CD8-positive, alpha-beta T cell (primary cell): ENCODE measurements at regions of chr7 and their contacts with region 1.

Region 1: DNA sequence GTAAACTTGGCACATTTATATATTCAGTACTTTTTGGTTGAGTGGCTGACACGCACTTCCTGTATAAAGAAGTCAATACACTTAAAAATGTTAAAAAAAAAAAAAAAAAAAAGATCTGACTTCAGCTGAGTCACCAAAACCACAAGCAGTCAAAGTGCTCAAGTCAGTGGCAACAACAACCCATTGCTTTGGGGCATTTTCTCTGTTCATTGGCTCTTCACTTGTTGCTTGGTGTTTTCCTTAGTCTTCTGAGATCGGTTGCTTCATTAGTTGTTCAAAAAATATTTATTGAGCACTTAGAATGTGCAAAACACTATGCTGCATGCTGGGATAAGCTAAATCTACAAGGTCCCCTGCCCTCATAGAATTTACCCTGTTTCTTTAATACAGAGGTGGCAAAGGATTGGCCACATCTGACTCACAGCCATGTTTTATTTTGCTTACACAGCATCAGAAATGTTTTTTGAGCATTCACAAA is 63.7 kb downstream of the ZNRF2 start:
- DNase-seq: peak in 8 of 9 experiments; percentile 23 to 92 (median 56)
- ATAC-seq: peak; percentile 89
- H3K4me3 ChIP-seq: peak overlapping the region in 1 of 2 experiments; percentile 11
- H3K4me3 Mint-ChIP-seq: peak overlapping the region; percentile 36
- H3K27ac ChIP-seq: peak overlapping the region; percentile 39 to 72
- H3K27ac Mint-ChIP-seq: peak overlapping the region; percentile 85
- H3K4me1 ChIP-seq: peaks cover 21% of the 10 kb centered on the region
- H3K4me1 Mint-ChIP-seq: peaks cover 59% of the 10 kb centered on the region
- H3K27me3 ChIP-seq: no peaks in the 10 kb centered on the region
- H3K27me3 Mint-ChIP-seq: no peaks in the 10 kb centered on the region
- CTCF ChIP-seq: no peak

Region 2: DNA sequence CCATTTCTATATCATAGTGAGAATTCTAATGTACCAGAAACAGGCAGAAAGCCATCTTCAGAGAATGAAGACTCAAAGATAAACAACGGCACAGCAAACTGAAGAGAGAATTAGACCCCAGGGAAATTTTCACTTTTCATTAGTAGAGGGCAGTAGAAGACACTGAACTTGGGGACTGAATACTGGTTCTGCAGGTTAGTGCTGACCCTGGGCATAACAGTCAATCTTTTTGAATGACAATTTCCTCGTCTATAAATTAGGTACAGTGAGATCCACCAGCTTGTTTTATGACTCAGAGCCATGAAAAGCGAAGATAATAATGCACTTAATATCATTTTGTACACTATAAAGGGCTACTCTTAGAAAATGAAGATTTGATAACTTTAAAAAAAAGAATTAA is 335.4 kb before region 1 on chr7:
- CTCF ChIA-PET with region 1: no interaction called
- POLR2A ChIA-PET with region 1: no interaction called
- intact Hi-C with region 1: no loop called
- DNase-seq: no peak
- ATAC-seq: no peak
- H3K4me3 ChIP-seq: no peak overlapping the region
- H3K4me3 Mint-ChIP-seq: no peak overlapping the region
- H3K27ac ChIP-seq: no peak overlapping the region
- H3K27ac Mint-ChIP-seq: no peak overlapping the region
- H3K4me1 ChIP-seq: no peaks in the 10 kb centered on the region
- H3K4me1 Mint-ChIP-seq: no peaks in the 10 kb centered on the region
- H3K27me3 ChIP-seq: no peaks in the 10 kb centered on the region
- H3K27me3 Mint-ChIP-seq: no peaks in the 10 kb centered on the region
- CTCF ChIP-seq: no peak

Region 3: DNA sequence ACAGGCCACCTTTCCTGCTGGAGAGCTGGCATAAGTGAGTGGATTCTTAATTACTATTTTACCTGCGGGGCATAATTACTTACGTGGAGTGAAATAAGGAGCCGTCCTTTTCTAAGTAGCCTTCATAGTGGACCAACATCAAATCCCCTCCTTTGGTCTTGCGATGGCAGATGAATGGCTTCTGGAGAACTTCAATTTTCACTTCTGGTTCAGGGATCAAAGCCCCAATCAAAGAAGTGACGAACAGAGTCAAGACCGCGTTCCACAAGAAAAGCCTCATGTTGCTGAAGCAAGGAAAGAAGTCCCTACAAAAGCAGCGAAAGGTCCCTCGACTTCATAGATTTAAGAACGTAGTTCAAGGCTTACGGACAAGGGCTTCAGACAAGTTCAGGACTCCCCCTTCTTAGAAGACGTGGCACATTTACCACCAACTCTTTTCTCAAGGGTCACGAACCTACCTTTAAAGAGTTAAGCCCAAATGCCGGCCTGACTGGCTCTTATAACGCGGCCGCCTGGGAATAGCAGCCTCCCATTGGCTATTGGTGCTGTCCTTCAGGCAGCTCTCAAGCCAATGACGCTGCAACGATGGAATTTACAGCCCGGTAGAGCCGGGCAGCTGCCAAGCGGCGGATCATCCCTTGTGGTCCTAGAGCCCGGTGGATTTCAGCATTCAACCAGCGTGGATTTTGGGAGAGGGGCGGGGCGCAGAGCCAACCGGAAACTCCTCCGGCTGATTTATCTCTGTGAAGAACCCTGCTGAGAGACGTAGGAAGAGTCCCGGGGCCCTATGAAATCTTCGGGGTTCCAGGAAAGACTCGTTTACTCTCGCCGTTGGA is 321.7 kb before region 1 on chr7 and contains the start of gene FKBP14:
- CTCF ChIA-PET with region 1: no interaction called
- POLR2A ChIA-PET with region 1: no interaction called
- intact Hi-C with region 1: loop called (anchors 2 to 5 kb)
- DNase-seq: peak; percentile 71 to 97 (median 91)
- ATAC-seq: peak; percentile 83
- H3K4me3 ChIP-seq: peak within 1 kb of the TSS; percentile 66 to 86
- H3K4me3 Mint-ChIP-seq: peak within 1 kb of the TSS; percentile 96
- H3K27ac ChIP-seq: peak within 1 kb of the TSS; percentile 65 to 70
- H3K27ac Mint-ChIP-seq: peak within 1 kb of the TSS; percentile 84
- H3K4me1 ChIP-seq: peaks cover 12% of the 10 kb centered on the region
- H3K4me1 Mint-ChIP-seq: peaks cover 46% of the 10 kb centered on the region
- H3K27me3 ChIP-seq: no peaks in the 10 kb centered on the region
- H3K27me3 Mint-ChIP-seq: no peaks in the 10 kb centered on the region
- CTCF ChIP-seq: no peak
- total RNA-seq, gene FKBP14: 5.7 to 6.1 TPM

Region 4: GRCh38 chr7:30164567-30164966 is 183.6 kb before region 1 on chr7:
- CTCF ChIA-PET with region 1: no interaction called
- POLR2A ChIA-PET with region 1: no interaction called
- intact Hi-C with region 1: loop called (anchors 2 to 5 kb)
- DNase-seq: peak in 2 of 9 experiments; percentile 40 to 53
- ATAC-seq: no peak
- H3K4me3 ChIP-seq: no peak overlapping the region
- H3K4me3 Mint-ChIP-seq: no peak overlapping the region
- H3K27ac ChIP-seq: no peak overlapping the region
- H3K27ac Mint-ChIP-seq: no peak overlapping the region
- H3K4me1 ChIP-seq: peaks cover 25% of the 10 kb centered on the region
- H3K4me1 Mint-ChIP-seq: peaks cover 32% of the 10 kb centered on the region
- H3K27me3 ChIP-seq: no peaks in the 10 kb centered on the region
- H3K27me3 Mint-ChIP-seq: no peaks in the 10 kb centered on the region
- CTCF ChIP-seq: peak; percentile 15

Region 5: GRCh38 chr7:30284298-30285066 is 63.6 kb before region 1 on chr7 and contains the start of gene ZNRF2:
- CTCF ChIA-PET with region 1: interaction called, 75 read pairs
- POLR2A ChIA-PET with region 1: interaction called, 8 read pairs
- intact Hi-C with region 1: loop called (anchors 1 kb)
- DNase-seq: peak; percentile 97 to 100 (median 99)
- ATAC-seq: peak; percentile 83
- H3K4me3 ChIP-seq: peak within 1 kb of the TSS; percentile 45 to 75
- H3K4me3 Mint-ChIP-seq: peak within 1 kb of the TSS; percentile 87
- H3K27ac ChIP-seq: peak within 1 kb of the TSS; percentile 76 to 80
- H3K27ac Mint-ChIP-seq: peak within 1 kb of the TSS; percentile 92
- H3K4me1 ChIP-seq: peaks cover 23% of the 10 kb centered on the region
- H3K4me1 Mint-ChIP-seq: peaks cover 40% of the 10 kb centered on the region
- H3K27me3 ChIP-seq: no peaks in the 10 kb centered on the region
- H3K27me3 Mint-ChIP-seq: no peaks in the 10 kb centered on the region
- CTCF ChIP-seq: peak; percentile 46
- total RNA-seq, gene ZNRF2: 20.1 to 26.1 TPM

Region 6: DNA sequence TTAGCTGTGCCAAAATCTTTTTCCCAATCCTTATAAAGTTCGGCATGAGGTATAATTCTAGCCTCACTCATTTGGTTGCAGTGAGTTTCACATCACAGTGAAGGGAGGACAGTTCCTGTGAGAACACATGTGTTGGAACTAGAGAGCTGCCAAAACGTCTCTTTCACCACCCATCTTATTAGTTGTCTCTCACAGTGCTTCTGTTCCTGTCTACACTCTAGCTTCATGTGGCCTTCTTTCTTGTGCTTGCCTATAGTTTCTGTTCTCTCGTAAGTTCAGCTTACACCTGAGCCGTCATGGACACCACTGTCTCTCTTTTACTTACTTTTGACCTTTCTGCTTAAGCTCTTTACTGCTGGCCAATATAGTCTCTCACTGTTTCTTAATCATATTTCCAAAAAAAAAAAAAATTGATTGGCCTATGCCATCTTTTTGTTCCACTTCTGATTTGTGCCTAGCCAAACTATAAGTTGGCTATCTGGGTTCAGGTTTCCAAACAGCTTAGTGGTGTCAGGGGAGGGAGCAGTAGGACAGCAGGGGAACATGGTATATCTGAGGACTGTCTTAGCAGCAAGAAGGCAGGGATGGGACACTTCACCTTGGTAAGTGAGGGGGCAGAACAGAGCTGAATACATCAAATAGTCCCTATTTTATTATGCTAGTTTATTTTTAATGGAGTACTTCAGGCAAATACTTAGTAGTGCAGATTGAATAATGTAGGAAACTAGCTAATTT is 25.7 kb before region 1 on chr7:
- CTCF ChIA-PET with region 1: interaction called, 11 read pairs
- POLR2A ChIA-PET with region 1: interaction called, 14 read pairs
- intact Hi-C with region 1: loop called in 1 of 2 experiments (anchors 1 kb)
- DNase-seq: peak in 6 of 9 experiments; percentile 8 to 76 (median 18)
- ATAC-seq: peak; percentile 63
- H3K4me3 ChIP-seq: peak overlapping the region; percentile 26 to 30
- H3K4me3 Mint-ChIP-seq: peak overlapping the region; percentile 87
- H3K27ac ChIP-seq: peak overlapping the region; percentile 53 to 92
- H3K27ac Mint-ChIP-seq: peak overlapping the region; percentile 98
- H3K4me1 ChIP-seq: peaks cover 31% of the 10 kb centered on the region
- H3K4me1 Mint-ChIP-seq: peaks cover 77% of the 10 kb centered on the region
- H3K27me3 ChIP-seq: no peaks in the 10 kb centered on the region
- H3K27me3 Mint-ChIP-seq: no peaks in the 10 kb centered on the region
- CTCF ChIP-seq: no peak

Region 7: DNA sequence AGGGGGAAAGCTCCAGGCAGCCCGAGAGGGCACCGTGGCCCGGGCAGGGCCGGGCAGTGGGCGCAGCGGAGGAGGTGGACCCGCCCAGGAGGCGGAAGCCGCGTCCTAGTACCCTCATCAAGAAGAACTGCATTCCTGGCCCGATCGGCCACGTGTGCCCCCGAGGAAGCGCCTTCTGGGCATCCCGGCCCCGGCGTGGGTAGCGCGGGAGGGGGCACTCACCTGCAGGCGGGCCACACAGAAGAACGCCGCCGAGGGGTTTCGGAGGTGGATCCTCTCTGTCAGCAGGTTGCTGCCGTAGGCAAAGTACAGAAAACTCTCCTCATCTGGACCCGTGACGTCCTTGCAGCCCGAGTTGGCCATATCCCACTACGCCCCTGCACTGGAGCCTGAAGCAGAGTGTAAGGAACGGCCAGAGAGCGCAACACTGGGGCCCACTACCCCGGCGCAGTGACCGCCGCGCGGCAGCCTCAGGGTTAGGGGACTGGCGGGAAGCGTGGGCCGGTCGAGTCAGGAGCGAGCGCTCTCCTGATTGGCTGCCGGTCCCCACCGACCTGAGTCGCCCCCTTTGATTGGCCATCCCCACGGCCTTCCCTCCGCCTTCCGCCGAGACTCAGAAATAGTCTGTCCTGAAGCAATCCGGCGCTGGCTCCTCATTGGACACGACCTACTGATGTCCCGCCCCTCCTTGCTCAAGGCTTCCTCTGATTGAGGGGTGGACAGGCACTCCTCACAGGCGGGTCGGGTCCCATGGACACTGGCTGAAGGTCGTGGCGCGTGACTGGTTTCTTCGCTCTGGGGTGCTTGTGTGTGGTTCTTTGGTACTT is 156.4 kb after region 1 on chr7 and contains the start of gene GGCT:
- CTCF ChIA-PET with region 1: no interaction called
- POLR2A ChIA-PET with region 1: no interaction called
- intact Hi-C with region 1: loop called (anchors 10 kb)
- DNase-seq: peak; percentile 90 to 98 (median 96)
- ATAC-seq: peak; percentile 97
- H3K4me3 ChIP-seq: peak within 1 kb of the TSS; percentile 80 to 98
- H3K4me3 Mint-ChIP-seq: peak within 1 kb of the TSS; percentile 95
- H3K27ac ChIP-seq: peak within 1 kb of the TSS; percentile 50 to 70
- H3K27ac Mint-ChIP-seq: peak within 1 kb of the TSS; percentile 94
- H3K4me1 ChIP-seq: peaks cover 23% of the 10 kb centered on the region
- H3K4me1 Mint-ChIP-seq: peaks cover 39% of the 10 kb centered on the region
- H3K27me3 ChIP-seq: no peaks in the 10 kb centered on the region
- H3K27me3 Mint-ChIP-seq: no peaks in the 10 kb centered on the region
- CTCF ChIP-seq: no peak
- total RNA-seq, gene GGCT: 5.9 to 6.1 TPM